Pancreas (tissue), 10 donors: ENCODE measurements at regions of chr11 and their contacts with region 1.

Region 1: GRCh38 chr11:55624531-55624930 is 10.4 kb upstream of the OR4P4 start:
- DNase-seq: no peak
- ATAC-seq: no peak
- H3K4me3 ChIP-seq: no peak overlapping the region
- H3K27ac ChIP-seq: no peak overlapping the region
- H3K4me1 ChIP-seq: no peaks in the 10 kb centered on the region
- H3K27me3 ChIP-seq: no peaks in the 10 kb centered on the region
- CTCF ChIP-seq: no peak

Region 2: DNA sequence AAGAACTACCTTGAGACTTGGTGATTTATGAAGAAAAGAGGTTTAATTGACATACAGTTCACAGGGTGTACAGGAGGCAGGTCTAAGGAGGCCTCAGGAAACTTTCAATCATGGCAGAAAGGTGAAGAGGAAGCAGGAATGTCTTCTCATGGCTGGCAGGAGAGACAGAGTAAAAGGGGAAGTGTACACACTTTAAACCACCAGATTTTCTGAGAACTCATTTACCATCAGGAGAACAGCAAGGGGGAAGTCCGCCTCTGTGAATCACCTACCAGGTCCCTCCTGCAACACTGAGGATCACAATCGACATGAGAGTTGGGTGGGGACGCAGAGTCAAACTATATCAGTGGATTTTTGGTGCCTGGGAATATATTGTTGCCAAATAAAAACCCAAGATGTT is 108.4 kb after region 1 on chr11:
- intact Hi-C with region 1: loop called in 1 of 3 experiments (anchors 10 kb)
- DNase-seq: no peak
- ATAC-seq: no peak
- H3K4me3 ChIP-seq: no peak overlapping the region
- H3K27ac ChIP-seq: no peak overlapping the region
- H3K4me1 ChIP-seq: no peaks in the 10 kb centered on the region
- H3K27me3 ChIP-seq: no peaks in the 10 kb centered on the region
- CTCF ChIP-seq: no peak

Region 3: DNA sequence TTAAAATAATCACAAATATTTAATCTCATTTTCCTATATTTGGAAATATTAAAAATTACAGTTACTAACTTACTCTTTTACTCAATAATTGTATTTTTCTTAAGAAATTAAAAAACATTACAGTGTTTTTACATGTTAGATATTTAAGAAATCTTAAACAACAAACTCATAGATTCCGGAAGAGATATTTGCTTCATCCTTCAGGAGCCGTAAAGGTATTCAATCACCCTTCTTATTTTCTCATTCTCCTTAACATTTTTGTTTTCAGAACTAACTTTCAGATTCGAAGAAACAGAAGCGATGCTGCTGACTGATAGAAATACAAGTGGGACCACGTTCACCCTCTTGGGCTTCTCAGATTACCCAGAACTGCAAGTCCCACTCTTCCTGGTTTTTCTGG is 194.8 kb after region 1 on chr11 and contains the start of gene OR5D18:
- intact Hi-C with region 1: no loop called
- DNase-seq: no peak
- ATAC-seq: no peak
- H3K4me3 ChIP-seq: no peak within 1 kb of the TSS
- H3K27ac ChIP-seq: no peak within 1 kb of the TSS
- H3K4me1 ChIP-seq: no peaks in the 10 kb centered on the region
- H3K27me3 ChIP-seq: no peaks in the 10 kb centered on the region
- CTCF ChIP-seq: no peak
- total RNA-seq, gene OR5D18: not detected